Dorsolateral prefrontal cortex (tissue), 120 donors: ENCODE measurements at regions of chr9 and their contacts with region 1.

Region 1: DNA sequence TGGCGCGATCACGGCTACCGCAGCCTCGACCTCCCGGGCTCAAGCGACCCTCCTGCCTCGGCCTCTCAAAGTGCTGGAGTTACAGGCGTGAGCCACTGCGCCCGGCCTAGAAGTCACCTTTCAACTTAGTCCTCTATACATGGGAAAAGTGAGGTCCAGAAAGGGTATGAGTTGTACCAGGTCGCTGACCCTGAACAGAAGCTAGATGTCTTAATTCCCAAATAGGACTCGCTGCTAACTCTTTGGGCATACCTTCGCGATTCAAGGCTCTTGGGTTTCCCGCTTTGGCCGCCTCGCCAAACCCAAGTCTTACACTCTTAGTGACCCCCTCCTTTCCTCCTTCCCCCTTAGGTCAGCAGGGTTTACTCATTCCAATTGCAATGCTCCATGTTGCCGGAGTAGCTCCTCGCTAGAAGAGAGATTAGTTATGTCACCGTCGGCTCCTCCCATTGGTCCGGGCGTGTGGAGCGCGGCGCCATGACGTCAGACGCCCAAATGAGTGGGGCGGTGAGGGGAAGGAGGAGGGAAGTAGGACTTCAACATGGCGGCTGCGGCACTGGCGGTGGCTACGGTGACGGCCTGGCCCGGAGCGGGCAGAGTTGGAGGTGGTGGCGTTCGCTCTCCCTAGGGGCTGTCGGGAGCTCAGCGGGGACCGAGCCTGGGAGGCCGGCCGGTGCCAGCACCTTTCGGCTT is at the start of gene UBAP1:
- DNase-seq: peak; percentile 91 to 98 (median 97)
- H3K4me3 ChIP-seq: peak within 1 kb of the TSS; percentile 57 to 98 (median 83)
- H3K27ac ChIP-seq: peak within 1 kb of the TSS; percentile 26 to 97 (median 91)
- H3K27me3 ChIP-seq: no peaks in the 10 kb centered on the region
- CTCF ChIP-seq: peak in 31 of 56 donors; percentile 3 to 40 (median 23)
- total RNA-seq, gene UBAP1: 48.3 to 81.3 (median 63.1) TPM

Region 2: GRCh38 chr9:34458013-34458958 is 279.6 kb after region 1 on chr9 and contains the starts of genes DNAI1 and FAM219A:
- intact Hi-C with region 1: loop called in 1 of 2 experiments (anchors 5 kb)
- DNase-seq: peak; percentile 98 to 100 (median 99)
- H3K4me3 ChIP-seq: peak within 1 kb of the TSS; percentile 54 to 96 (median 83)
- H3K27ac ChIP-seq: peak within 1 kb of the TSS in 57 of 59 donors; percentile 3 to 92 (median 73)
- H3K27me3 ChIP-seq: no peaks in the 10 kb centered on the region
- CTCF ChIP-seq: peak in 26 of 56 donors; percentile 5 to 58 (median 28)
- total RNA-seq, gene DNAI1: 1.0 to 11.2 (median 4.2) TPM
- total RNA-seq, gene FAM219A: 93.3 to 167 (median 131) TPM